GM12878 (cell line): ENCODE measurements at regions of chr5 and their contacts with region 1.

Region 1: GRCh38 chr5:17228821-17229291 is 11.4 kb downstream of the BASP1 start:
- DNase-seq: peak; percentile 66
- ATAC-seq: peak; percentile 64
- H3K4me3 ChIP-seq: peak overlapping the region; percentile 13; the same call in 1 of the 2 replicates
- H3K27ac ChIP-seq: peak overlapping the region; percentile 88
- H3K4me1 ChIP-seq: peaks cover 34% of the 10 kb centered on the region
- H3K27me3 ChIP-seq: no peaks in the 10 kb centered on the region
- CTCF ChIP-seq: no peak
- EP300 ChIP-seq: peak; percentile 24 to 35; a peak in 1 of 4 replicates
- POLR2A ChIP-seq: no peak
- RAD21 ChIP-seq: 0 out of 2 replicates have a peak, but pooled peaks have one; percentile 1

Region 2: DNA sequence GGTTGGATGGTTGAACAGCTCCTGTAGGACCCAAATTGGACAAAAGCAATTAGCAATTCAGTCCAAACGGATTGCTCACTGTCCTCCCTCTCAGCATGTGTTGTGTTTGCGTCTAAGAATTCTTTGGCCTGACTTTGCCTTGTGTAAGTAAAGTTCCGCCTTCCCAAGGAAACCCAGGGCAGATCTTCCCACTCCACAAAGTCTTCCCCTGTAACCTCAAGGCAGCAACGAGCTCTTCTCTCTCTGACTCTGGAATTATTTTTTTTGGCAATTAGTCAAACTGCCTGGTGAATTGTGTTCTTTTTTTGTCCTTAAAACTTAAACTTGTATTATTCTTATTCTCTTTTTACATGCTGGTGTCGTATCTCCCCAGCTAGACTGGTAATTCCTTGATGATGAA is 32.2 kb before region 1 on chr5:
- CTCF ChIA-PET with region 1: no interaction called
- POLR2A ChIA-PET with region 1: no interaction called
- RAD21 ChIA-PET with region 1: no interaction called
- SMC1A ChIA-PET with region 1: no interaction called
- in situ Hi-C with region 1: no loop called
- intact Hi-C with region 1: no loop called
- DNase-seq: no peak
- ATAC-seq: no peak
- H3K4me3 ChIP-seq: no peak overlapping the region
- H3K27ac ChIP-seq: no peak overlapping the region
- H3K4me1 ChIP-seq: no peaks in the 10 kb centered on the region
- H3K27me3 ChIP-seq: no peaks in the 10 kb centered on the region
- CTCF ChIP-seq: no peak
- EP300 ChIP-seq: no peak
- POLR2A ChIP-seq: no peak
- RAD21 ChIP-seq: no peak

Region 3: GRCh38 chr5:17282283-17283120 is 53.6 kb after region 1 on chr5:
- CTCF ChIA-PET with region 1: interaction called, 4 read pairs
- POLR2A ChIA-PET with region 1: interaction called, 28 read pairs
- RAD21 ChIA-PET with region 1: interaction called, 22 read pairs
- SMC1A ChIA-PET with region 1: interaction called, 19 read pairs
- in situ Hi-C with region 1: loop called (anchors 5 kb)
- intact Hi-C with region 1: no loop called
- DNase-seq: peak; percentile 91
- ATAC-seq: peak; percentile 95
- H3K4me3 ChIP-seq: peak overlapping the region; percentile 55
- H3K27ac ChIP-seq: peak overlapping the region; percentile 71
- H3K4me1 ChIP-seq: peaks cover 18% of the 10 kb centered on the region
- H3K27me3 ChIP-seq: no peaks in the 10 kb centered on the region
- CTCF ChIP-seq: no peak; a peak in 1 of 6 replicates
- EP300 ChIP-seq: peak; percentile 45 to 61; a peak in 3 of 4 replicates
- POLR2A ChIP-seq: no peak
- RAD21 ChIP-seq: no peak; the same call in 1 of the 2 replicates

Region 4: GRCh38 chr5:18745646-18746615 is 1517.1 kb after region 1 on chr5:
- CTCF ChIA-PET with region 1: no interaction called
- POLR2A ChIA-PET with region 1: no interaction called
- RAD21 ChIA-PET with region 1: no interaction called
- SMC1A ChIA-PET with region 1: no interaction called
- in situ Hi-C with region 1: loop called (anchors 25 kb)
- intact Hi-C with region 1: no loop called
- DNase-seq: peak; percentile 89
- ATAC-seq: peak; percentile 75
- H3K4me3 ChIP-seq: peak overlapping the region; percentile 84
- H3K27ac ChIP-seq: peak overlapping the region; percentile 82
- H3K4me1 ChIP-seq: peaks cover 24% of the 10 kb centered on the region
- H3K27me3 ChIP-seq: no peaks in the 10 kb centered on the region
- CTCF ChIP-seq: no peak
- EP300 ChIP-seq: peak in 1 of 2 experiments; percentile 48; a peak in 1 of 4 replicates
- POLR2A ChIP-seq: peak; percentile 49
- RAD21 ChIP-seq: no peak